HEK293 (cell line): ENCODE measurements at regions of chr17 and their contacts with region 1.

Region 1: GRCh38 chr17:77957857-77958715 is at the start of gene TNRC6C:
- H3K4me3 ChIP-seq: peak within 1 kb of the TSS; percentile 79
- H3K27ac ChIP-seq: peak within 1 kb of the TSS; percentile 89; the same call in 1 of the 2 replicates
- H3K4me1 ChIP-seq: peaks cover 16% of the 10 kb centered on the region
- CTCF ChIP-seq: peak; percentile 45; the same call in 1 of the 2 replicates

Region 2: GRCh38 chr17:77542551-77543490 is 415.3 kb before region 1 on chr17:
- CTCF ChIA-PET with region 1: no interaction called
- POLR2A ChIA-PET with region 1: interaction called, 23 read pairs
- H3K4me3 ChIP-seq: no peak overlapping the region
- H3K27ac ChIP-seq: no peak overlapping the region; the same call in 1 of the 2 replicates
- H3K4me1 ChIP-seq: peaks cover 13% of the 10 kb centered on the region
- CTCF ChIP-seq: peak; percentile 75; the same call in 1 of the 2 replicates

Region 3: DNA sequence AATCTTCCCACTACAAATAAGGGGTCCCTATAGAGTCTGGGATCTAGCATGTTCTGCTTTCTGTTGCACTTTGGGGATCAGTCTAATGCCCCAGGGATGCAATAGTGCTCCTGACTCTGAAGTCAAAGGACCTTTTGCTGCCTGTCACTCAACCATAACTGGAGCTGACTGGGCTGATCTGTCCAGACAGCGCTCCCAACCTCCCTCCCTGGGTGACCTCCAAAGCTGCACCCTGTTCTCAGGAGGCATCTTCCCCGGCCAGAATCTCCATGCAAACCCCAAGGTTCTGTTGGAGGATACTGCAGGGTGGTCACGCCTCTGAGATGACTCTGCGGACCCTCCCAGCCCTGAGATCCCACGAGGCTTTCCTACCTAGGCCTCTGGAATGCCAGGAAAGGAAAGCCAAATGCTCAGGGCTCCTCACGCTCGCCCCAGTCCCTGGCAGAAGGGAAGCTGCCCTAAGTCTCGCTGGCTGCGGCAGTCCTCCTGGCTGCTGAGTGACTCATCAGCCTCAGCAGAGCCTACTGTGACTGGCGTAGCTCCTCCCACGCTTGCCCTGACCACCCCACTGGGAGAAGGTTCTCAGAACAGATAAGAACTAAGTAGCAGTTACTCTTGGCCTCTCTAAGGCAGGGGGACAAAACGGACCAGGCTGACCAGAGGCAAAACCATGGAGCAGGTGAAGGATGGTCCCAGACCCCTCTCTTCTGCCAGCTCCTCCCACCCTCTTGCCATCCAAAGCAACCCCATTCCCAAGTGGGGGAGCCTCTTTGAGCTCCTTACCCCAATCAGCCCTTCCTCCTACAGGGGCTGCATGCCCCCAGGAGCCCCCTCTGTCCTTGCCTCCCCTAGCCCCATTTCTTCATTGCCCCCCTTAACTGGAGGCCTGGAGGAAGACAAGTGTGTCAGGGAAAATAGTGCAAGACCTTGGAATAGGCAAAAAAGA is 123.6 kb before region 1 on chr17:
- CTCF ChIA-PET with region 1: interaction called, 3 read pairs
- POLR2A ChIA-PET with region 1: interaction called, 39 read pairs
- H3K4me3 ChIP-seq: no peak overlapping the region
- H3K27ac ChIP-seq: no peak overlapping the region
- H3K4me1 ChIP-seq: peaks cover 10% of the 10 kb centered on the region; the same call in 1 of the 2 replicates
- CTCF ChIP-seq: no peak

Region 4: DNA sequence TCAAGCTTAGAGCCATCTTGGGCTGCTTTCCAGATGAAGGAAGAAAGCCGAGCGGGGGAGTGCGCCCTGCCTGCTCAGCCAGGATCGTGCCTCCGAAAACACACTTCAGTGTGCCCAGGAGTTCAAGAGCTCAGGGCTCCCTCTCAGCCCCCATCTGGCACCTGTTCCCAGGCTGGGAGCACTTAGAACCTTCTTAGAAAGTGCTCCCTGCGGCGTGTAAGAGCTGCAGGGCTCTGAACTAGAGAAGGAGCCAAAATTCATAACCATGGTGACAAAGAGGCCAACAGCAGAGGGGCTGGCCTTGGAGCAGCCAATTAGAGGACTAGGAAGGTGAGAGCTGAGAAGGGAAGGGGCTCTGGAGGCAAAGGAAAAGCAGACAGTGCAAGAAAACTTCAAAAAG is 58.6 kb before region 1 on chr17:
- CTCF ChIA-PET with region 1: no interaction called
- POLR2A ChIA-PET with region 1: interaction called, 14 read pairs
- H3K4me3 ChIP-seq: no peak overlapping the region
- H3K27ac ChIP-seq: no peak overlapping the region
- H3K4me1 ChIP-seq: no peaks in the 10 kb centered on the region
- CTCF ChIP-seq: no peak

Region 5: DNA sequence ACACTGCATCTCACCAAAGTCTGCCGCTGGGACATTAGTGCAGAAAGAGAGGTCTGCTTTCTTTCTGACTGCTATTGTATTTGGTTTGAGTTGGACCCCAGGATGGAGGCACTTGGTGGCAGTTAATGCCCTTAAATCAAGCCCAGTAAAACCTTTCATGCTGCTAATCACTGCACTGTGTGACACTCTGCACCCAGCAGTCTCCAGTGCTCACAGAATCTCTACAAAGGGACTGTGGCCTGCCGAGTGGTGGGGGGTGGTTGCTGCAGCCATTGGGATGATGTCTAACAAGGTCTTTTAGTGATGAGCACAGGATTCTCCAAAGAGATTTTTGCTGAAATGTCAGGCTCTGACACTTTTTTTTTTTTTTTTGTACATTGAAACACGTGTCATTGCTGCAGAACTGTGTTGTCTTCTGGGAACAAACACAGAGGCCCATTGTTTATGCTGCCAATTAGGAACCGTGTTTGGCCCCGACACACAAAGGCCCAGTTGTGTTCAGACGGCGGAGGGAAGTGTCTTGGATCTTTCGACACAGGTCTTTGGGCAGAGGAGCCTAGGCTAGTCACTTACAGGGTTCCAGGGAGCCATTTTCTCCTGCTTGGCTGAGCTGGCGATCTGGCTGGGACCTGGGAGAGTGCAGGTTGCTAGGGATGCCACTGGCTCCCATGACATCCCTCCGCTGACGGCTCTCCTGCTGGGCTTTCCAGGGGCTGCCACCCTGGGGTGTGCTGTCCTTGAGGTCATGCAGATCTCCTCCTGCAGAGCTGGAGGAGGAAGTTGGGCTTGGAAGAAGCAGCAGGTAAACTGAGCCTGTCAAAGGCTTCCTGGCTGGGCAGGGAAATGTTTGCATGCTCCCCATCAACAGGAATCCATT is 15.7 kb before region 1 on chr17:
- CTCF ChIA-PET with region 1: no interaction called
- POLR2A ChIA-PET with region 1: interaction called, 37 read pairs
- H3K4me3 ChIP-seq: no peak overlapping the region
- H3K27ac ChIP-seq: no peak overlapping the region
- H3K4me1 ChIP-seq: no peaks in the 10 kb centered on the region
- CTCF ChIP-seq: no peak

Region 6: GRCh38 chr17:78000341-78000740 is 42.3 kb after region 1 on chr17:
- CTCF ChIA-PET with region 1: no interaction called
- POLR2A ChIA-PET with region 1: interaction called, 24 read pairs
- H3K4me3 ChIP-seq: no peak overlapping the region
- H3K27ac ChIP-seq: no peak overlapping the region
- H3K4me1 ChIP-seq: peaks cover 19% of the 10 kb centered on the region
- CTCF ChIP-seq: no peak

Region 7: DNA sequence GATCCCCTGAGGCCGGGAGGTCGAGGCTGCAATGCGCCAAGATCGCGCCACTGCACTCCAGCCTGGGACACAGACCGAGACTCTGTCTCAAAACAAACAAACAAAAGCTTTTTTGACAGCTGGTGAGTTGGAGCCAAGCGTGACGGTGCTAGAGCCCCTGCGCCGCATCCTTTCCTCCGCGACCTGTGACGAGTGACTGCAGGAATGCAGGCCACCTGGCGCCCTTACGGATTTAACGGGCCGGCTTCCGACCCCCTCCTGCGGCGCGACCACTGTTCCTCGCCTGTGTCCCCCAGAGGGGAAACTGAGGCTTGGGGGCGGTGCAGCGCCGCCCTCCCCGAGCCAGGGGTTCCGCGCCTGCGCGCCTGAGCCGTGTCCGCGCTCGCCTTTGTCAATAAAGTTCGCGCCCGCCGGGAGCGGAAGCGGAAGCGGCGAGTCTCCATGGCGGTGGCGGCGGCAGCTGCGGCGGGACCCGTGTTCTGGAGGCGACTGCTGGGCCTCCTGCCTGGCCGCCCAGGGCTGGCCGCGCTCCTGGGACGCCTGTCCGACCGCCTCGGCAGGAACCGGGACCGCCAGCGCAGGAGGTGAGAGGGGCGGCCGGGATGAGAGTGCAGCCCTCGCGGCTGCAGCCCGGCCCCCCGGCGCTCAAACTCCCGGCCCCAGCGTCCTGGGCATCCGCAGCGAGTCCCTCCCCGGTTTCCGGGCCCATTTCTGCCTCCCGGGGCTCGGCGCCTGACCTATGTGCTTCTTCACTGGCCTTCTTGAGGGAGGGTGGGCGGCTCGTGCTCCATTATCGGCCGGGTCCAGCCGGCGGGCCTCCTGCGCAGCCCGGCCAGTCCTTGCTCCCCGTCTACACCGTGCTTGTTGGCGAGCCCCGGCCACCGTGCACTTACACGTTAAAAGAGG is 420.4 kb after region 1 on chr17 and contains the start of gene PGS1:
- CTCF ChIA-PET with region 1: no interaction called
- POLR2A ChIA-PET with region 1: no interaction called
- H3K4me3 ChIP-seq: peak within 1 kb of the TSS; percentile 92
- H3K27ac ChIP-seq: peak within 1 kb of the TSS; percentile 51; the same call in 1 of the 2 replicates
- H3K4me1 ChIP-seq: peaks cover 5% of the 10 kb centered on the region; the same call in 1 of the 2 replicates
- CTCF ChIP-seq: peak; percentile 52; the same call in 1 of the 2 replicates